Endothelial cell of umbilical vein (primary cell): ENCODE measurements at regions of chr9 and their contacts with region 1.

Region 1: GRCh38 chr9:111525056-111525977 is at the start of gene ZNF483:
- DNase-seq: peak; percentile 84
- H3K4me3 ChIP-seq: peak within 1 kb of the TSS; percentile 7 to 88 (median 54)
- H3K27ac ChIP-seq: no peak within 1 kb of the TSS
- H3K4me1 ChIP-seq: peaks cover 6% of the 10 kb centered on the region
- H3K27me3 ChIP-seq: peaks cover 0 to 2% of the 10 kb centered on the region in 2 experiments
- CTCF ChIP-seq: no peak
- POLR2A ChIP-seq: no peak
- total RNA-seq, gene ZNF483: 1.8 and 2.0 TPM in 2 replicates

Region 2: DNA sequence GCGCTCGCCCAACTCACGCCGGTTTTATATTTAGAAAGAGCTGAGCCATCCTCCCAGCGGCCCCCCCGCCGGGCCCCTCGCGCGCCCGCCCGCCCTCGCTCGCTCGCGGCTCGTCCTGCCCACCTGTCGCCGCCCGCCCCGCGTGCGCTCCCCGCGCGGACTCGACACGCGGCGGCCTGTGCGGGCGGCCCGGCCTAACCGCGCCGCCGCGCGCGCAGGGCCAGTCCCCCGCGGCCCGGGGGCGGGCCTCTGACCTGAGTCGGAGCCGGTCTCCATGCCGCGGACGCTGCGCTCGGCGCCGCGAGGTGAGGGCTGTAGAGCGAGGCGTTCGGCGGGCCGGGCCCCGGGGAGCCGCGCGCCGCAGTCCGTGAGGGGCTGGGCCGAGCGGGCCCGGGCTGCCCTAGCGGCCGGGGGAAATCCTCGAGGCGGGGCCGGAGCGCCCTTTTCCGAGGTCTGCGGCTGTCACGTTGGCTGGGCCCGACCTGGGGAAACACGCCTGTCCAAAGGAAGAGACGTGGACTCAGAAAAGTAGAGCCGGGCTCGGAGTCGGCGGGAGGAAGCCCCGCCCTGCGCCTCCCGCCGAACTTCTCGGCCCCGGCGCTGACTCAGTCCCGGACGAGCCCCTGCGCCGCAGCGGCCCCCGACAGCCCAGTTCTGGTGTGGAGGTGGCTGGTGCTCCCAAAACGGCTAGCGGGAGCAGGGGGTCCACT is 41.3 kb before region 1 on chr9 and contains the start of gene ECPAS:
- CTCF ChIA-PET with region 1: interaction called, 3 read pairs
- POLR2A ChIA-PET with region 1: no interaction called
- dilution Hi-C with region 1: no loop called
- intact Hi-C with region 1: loop called (anchors 1 kb)
- DNase-seq: peak; percentile 81
- H3K4me3 ChIP-seq: peak within 1 kb of the TSS; percentile 49 to 78 (median 75)
- H3K27ac ChIP-seq: peak within 1 kb of the TSS; percentile 70
- H3K4me1 ChIP-seq: peaks cover 8% of the 10 kb centered on the region
- H3K27me3 ChIP-seq: no peaks in the 10 kb centered on the region
- CTCF ChIP-seq: peak in 1 of 2 donors; percentile 3
- POLR2A ChIP-seq: no peak
- total RNA-seq, gene ECPAS: 72.3 and 89.3 TPM in 2 replicates

Region 3: DNA sequence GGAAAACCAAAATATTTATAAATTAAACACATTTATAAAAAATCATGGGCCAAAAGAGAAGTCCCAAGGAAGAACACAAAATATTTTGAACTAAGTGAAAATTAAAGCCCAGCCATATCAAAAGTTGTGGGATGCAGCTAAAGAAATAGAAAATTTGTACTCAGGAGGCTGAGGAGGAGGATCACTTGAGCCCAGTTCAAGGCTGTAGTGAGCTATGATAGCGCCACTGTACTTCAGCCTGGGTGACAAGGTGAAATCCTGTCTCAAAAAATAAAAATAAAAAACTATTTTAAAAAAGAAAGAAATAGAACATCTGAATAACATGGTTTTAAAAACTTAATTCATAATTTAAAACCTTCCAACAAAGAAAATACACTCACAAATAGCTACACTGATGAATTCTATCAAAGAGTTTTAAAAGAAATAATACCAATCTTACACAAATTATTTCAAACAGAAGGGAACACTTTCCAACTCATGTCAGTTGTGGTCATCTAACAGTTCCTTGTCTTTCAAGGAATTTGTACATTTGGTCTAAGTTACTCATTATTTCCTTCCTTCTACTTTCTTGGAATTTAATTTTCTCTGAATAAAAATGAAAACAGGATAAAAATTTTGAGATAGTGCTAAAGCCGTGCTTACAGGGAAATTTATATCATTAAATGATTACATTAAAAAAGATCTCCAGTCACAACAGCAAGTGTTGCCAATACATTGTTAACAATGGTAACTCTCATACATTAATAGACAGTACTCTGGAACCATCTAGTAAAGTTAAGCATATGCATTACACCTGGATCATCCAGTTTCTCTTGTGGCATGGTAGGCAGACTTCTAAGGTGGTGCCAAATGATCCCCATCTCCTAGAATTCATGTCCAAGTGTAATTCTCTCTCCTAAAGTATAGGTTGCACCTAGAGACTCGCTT is 790.3 kb after region 1 on chr9:
- CTCF ChIA-PET with region 1: no interaction called
- POLR2A ChIA-PET with region 1: no interaction called
- dilution Hi-C with region 1: no loop called
- intact Hi-C with region 1: no loop called
- DNase-seq: peak; percentile 40
- H3K4me3 ChIP-seq: no peak overlapping the region
- H3K27ac ChIP-seq: no peak overlapping the region
- H3K4me1 ChIP-seq: peaks cover 17% of the 10 kb centered on the region
- H3K27me3 ChIP-seq: no peaks in the 10 kb centered on the region
- CTCF ChIP-seq: no peak
- POLR2A ChIP-seq: no peak

Region 4: DNA sequence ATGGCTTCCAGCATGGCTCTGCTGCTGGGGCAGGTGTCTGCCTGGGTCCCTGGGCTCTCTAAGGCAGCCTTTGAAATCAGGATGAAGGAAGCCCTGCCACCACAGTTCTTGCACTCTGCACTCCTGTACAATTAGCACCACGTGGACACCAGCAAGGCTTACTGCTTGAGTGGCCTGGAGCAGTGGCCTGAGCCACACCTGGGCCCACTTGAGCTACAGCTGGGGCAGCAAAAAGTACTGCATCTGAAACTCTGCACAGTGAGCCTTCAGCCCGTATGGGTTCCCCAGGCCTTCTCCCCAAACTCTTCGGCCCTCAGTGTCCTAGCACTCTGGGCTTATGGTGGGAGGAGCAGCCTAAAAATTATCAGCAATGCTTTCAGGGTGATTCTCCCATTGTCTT is 1200.6 kb after region 1 on chr9:
- CTCF ChIA-PET with region 1: no interaction called
- POLR2A ChIA-PET with region 1: no interaction called
- dilution Hi-C with region 1: no loop called
- intact Hi-C with region 1: no loop called
- DNase-seq: no peak
- H3K4me3 ChIP-seq: no peak overlapping the region
- H3K27ac ChIP-seq: no peak overlapping the region
- H3K4me1 ChIP-seq: no peaks in the 10 kb centered on the region
- H3K27me3 ChIP-seq: peaks cover 0 to 2% of the 10 kb centered on the region in 2 experiments
- CTCF ChIP-seq: no peak
- POLR2A ChIP-seq: no peak